Aorta (tissue), 5 donors: ENCODE measurements at regions of chr10 and their contacts with region 1.

Region 1: DNA sequence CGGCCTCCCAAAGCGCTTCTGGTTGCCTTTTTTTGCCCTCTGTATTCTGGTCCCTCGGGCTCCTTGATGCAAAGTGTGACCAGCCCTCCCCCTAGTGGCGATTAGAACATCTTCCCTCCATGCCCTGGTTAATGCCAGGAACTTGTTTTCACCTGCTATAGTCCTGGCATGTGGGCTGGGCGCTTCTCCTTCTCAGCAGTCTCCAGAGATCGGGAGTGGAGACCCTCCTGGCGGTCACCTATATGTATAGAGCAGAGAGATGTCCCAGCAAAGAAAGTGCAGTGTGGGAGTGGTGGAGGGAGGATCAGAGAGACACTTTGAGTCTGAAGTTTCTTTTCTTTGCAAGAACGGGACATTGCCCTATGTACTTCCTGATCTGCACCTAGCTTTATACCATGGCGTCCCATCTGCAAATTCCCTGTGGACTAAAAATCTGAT is 264.1 kb downstream of the OTUD1 start:
- DNase-seq: peak; percentile 57 to 73
- ATAC-seq: peak; percentile 63
- H3K4me3 ChIP-seq: no peak overlapping the region
- H3K27ac ChIP-seq: no peak overlapping the region
- H3K4me1 ChIP-seq: no peaks in the 10 kb centered on the region
- H3K27me3 ChIP-seq: no peaks in the 10 kb centered on the region

Region 2: DNA sequence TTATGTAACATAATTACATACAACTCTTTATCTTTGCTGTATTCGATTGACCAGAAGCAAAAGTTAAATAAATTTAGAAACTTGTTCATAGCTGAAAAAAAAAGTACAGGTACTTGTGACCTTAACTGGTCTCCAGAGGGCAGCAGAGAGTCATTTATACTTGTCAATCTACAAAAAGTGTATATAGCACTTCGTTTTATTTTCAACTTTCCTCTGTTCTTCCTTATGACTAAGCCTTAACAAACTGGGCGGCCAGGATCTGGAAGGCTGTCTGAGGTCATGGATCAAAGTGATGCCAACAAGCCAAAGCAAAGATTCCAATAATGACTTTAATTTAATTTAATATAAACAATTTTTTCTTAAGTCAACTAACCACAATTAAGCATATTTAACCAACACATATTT is 388.2 kb before region 1 on chr10:
- intact Hi-C with region 1: loop called (anchors 5 kb)
- DNase-seq: no peak
- ATAC-seq: no peak
- H3K4me3 ChIP-seq: no peak overlapping the region
- H3K27ac ChIP-seq: no peak overlapping the region
- H3K4me1 ChIP-seq: no peaks in the 10 kb centered on the region
- H3K27me3 ChIP-seq: no peaks in the 10 kb centered on the region

Region 3: DNA sequence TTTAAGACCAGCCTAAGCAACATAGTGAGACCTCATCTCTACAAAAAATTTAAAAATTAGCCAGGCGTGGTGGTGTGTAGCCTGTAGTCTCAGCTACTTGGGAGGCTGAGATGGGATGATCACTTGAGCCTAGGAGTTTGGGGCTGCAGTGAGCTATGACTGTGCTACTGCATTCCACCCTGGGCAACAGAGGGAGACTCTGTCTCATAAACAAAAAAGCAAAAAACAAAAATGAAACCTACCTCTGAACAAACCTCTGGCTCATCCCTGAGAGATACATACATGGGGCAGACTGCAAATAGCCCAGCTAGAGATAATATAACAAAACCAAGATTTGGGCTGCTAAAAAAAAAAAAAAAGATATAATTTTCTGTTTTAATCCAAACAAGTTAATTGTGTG is 377.9 kb before region 1 on chr10:
- intact Hi-C with region 1: no loop called
- DNase-seq: no peak
- ATAC-seq: no peak
- H3K4me3 ChIP-seq: no peak overlapping the region
- H3K27ac ChIP-seq: no peak overlapping the region
- H3K4me1 ChIP-seq: no peaks in the 10 kb centered on the region
- H3K27me3 ChIP-seq: no peaks in the 10 kb centered on the region

Region 4: GRCh38 chr10:23516530-23516929 is 186.5 kb before region 1 on chr10:
- intact Hi-C with region 1: loop called (anchors 5 to 10 kb)
- DNase-seq: no peak
- ATAC-seq: no peak
- H3K4me3 ChIP-seq: no peak overlapping the region
- H3K27ac ChIP-seq: no peak overlapping the region
- H3K4me1 ChIP-seq: no peaks in the 10 kb centered on the region
- H3K27me3 ChIP-seq: no peaks in the 10 kb centered on the region

Region 5: DNA sequence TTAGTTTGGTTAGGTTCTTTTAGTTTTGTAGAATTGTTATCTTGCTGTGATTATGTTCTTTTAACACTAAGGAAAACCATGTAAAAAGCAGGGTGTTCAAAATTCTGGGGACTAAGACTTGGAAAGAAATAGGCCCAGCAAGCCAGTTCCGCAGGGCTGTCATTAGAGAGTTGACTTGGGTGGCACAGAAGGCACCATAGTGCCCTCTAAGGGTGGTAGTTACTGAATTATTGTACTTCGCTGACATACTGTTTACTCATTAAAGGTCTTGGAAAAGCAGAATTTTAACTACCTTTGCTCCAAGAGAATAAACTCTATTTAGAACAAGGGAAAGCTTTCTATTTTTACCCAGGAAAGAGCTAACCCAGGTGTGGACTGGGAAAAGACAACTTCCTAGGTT is 177.6 kb before region 1 on chr10:
- intact Hi-C with region 1: loop called in 1 of 2 experiments (anchors 10 kb)
- DNase-seq: no peak
- ATAC-seq: no peak
- H3K4me3 ChIP-seq: no peak overlapping the region
- H3K27ac ChIP-seq: no peak overlapping the region
- H3K4me1 ChIP-seq: no peaks in the 10 kb centered on the region
- H3K27me3 ChIP-seq: no peaks in the 10 kb centered on the region